HCT116 (cell line): ENCODE measurements at regions of chr17 and their contacts with region 1.

Region 1: DNA sequence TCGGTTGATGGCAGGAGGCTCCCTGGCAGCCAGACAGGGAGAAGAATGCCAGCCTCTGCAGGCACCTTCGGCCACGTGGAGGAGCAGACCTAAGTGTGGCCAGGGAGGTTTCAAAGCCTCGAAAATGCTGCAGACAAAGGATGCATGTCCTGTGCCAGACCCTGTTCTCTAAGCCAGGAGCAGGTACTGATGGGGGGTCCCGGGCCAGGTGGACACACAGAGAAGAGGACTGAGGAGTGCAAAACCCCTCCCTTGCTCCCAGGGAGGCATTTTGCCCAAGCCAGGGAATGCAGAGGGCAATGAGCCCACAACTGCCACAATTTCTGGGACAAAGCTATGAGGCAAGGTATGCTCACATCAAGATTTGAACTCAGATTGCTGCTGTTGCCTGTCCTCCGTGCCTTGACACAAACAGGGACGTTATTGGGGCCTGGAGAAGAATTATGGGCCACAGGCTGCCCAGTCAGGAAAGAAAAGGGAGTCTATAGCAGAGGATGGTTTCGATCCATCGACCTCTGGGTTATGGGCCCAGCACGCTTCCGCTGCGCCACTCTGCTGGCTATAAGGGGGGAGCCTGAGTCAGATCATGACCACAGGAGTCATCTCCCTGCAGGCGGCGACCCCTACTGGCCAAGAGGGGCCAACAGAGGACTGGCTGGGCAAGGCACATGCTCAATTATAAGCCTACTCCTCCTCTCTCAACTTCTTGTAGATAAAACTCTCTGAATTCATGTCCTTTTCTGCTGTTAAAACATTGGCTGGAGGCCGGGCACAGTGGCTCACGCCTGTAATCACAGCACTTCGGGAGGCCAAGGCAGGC is 25.1 kb upstream of the FOXK2 start:
- DNase-seq: peak; percentile 97
- ATAC-seq: peak; percentile 87
- H3K4me3 ChIP-seq: peak overlapping the region in 1 of 2 experiments; percentile 9; a peak in 1 of 4 replicates
- H3K27ac ChIP-seq: peak overlapping the region; percentile 76
- H3K4me1 ChIP-seq: peaks cover 39 to 53% of the 10 kb centered on the region in 2 experiments
- H3K27me3 ChIP-seq: no peaks in the 10 kb centered on the region
- CTCF ChIP-seq: peak; percentile 88 to 97 (median 97)
- POLR2A ChIP-seq: peak; percentile 39
- RAD21 ChIP-seq: no peak

Region 2: DNA sequence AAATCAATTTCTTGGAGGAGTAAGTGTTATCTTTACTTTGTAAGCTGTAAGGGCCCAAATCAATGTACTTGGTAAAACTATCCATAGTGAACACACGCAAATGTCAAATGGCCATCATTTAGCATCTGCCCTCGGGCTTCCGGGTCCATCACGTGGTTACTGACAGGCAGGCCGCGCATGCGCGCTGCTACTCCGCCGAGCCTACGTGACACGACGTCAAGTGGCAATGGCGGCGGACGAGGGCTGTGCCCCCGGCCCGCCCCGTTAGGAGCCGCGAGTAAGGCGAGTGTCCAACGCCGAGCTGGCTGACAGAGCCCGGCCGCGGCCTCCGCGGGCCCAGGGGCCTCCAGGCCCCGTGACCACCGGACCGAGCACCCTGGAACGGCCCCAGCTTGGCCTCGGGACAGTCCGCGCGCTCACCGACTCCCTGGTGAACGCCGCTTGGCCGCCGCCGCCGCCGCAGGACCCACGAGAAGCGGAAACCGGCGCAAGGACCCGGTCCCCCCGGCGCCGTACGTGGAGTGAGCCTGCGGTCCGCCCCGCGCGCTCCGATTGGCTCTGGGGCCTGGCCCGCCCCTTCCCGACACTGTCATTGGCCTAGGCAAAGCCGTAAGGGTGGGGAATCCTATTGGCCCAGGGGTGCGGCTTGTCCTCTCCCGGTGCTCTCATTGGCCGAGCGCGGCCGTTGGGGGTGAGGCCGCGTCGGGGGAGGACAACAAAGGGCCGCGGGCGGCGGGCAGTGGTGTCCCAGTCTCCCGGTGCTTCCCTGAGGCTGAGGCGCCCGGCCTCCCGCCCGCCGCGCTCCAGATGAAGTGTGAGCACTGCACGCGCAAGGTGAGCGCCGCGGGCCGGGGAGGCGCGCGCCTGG is 36.2 kb before region 1 on chr17 and contains the start of gene NARF:
- CTCF ChIA-PET with region 1: no interaction called
- POLR2A ChIA-PET with region 1: no interaction called
- RAD21 ChIA-PET with region 1: no interaction called
- intact Hi-C with region 1: loop called (anchors 2 kb)
- DNase-seq: peak; percentile 98
- ATAC-seq: peak; percentile 98
- H3K4me3 ChIP-seq: peak within 1 kb of the TSS; percentile 76 to 96
- H3K27ac ChIP-seq: peak within 1 kb of the TSS; percentile 99
- H3K4me1 ChIP-seq: peaks cover 8 to 19% of the 10 kb centered on the region in 2 experiments; a peak in 3 of 4 replicates
- H3K27me3 ChIP-seq: no peaks in the 10 kb centered on the region
- CTCF ChIP-seq: no peak
- POLR2A ChIP-seq: peak; percentile 58
- RAD21 ChIP-seq: no peak
- total RNA-seq, gene NARF: 91.8 TPM

Region 3: GRCh38 chr17:82528484-82529265 is 34.2 kb after region 1 on chr17:
- CTCF ChIA-PET with region 1: no interaction called
- POLR2A ChIA-PET with region 1: interaction called, 3 read pairs
- RAD21 ChIA-PET with region 1: no interaction called
- intact Hi-C with region 1: loop called (anchors 5 kb)
- DNase-seq: peak; percentile 31
- ATAC-seq: peak; percentile 90
- H3K4me3 ChIP-seq: no peak overlapping the region
- H3K27ac ChIP-seq: 0 out of 2 replicates have a peak overlapping the region, but pooled peaks have one; percentile 10
- H3K4me1 ChIP-seq: peaks cover 22 to 61% of the 10 kb centered on the region in 2 experiments
- H3K27me3 ChIP-seq: no peaks in the 10 kb centered on the region
- CTCF ChIP-seq: peak in 2 of 3 experiments; percentile 64 to 70; a peak in 4 of 6 replicates
- POLR2A ChIP-seq: no peak
- RAD21 ChIP-seq: no peak; the same call in 1 of the 2 replicates